ENCODE measurements at regions of chr11 and their contacts with region 1.

Region 1: GRCh38 chr11:1515082-1516060 is 28.8 kb upstream of the MOB2 start:
- DNase-seq: peak; percentile 53 to 87
- ATAC-seq: peak; percentile 89

Region 2: DNA sequence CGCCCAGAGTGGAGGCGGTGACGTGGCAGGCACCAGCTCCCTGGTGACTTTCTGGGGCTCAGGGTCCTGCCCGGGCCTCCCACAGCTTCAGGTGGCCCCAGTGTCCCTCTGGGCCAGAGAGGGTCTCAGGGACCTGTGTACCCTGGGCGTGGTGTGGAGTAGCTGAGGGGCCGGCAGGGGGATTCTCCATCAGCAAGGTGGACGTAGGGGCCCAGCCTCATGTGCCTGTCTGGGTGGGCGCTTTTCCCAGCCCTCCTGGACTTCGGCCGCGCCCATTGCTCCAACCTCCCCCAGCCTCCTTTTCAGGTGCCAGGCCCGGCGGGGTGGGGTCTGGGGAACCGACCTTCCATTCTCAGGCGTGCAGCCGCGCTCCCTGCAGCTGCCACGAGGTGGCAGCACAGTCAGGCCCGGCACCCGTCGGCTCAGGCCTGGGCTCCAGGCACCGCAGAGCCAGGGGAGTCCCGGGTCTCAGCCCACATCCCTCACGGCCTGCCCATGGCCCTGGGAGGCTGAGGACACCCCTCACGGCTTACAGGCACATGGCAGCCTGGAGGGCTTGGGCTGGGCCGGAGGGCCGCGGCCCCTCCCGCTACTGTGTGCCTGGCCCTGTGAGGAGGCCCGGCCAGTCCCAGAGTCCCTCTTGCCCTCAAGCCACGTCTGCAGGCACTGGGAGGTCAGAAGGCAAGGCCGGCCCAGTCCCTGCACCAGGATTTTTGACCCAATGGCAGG is 312.4 kb before region 1 on chr11:
- intact Hi-C with region 1: loop called (anchors 5 to 10 kb)
- DNase-seq: peak; percentile 43 to 76
- ATAC-seq: peak; percentile 73

Region 3: GRCh38 chr11:1458340-1459218 is 56.8 kb before region 1 on chr11:
- intact Hi-C with region 1: loop called in 1 of 2 experiments (anchors 10 kb)
- DNase-seq: peak; percentile 76 to 77
- ATAC-seq: peak; percentile 73

Region 4: GRCh38 chr11:1628506-1629325 is 113.3 kb after region 1 on chr11:
- intact Hi-C with region 1: no loop called
- DNase-seq: peak in 1 of 2 donors; percentile 64
- ATAC-seq: peak; percentile 91

Measured in left colon (tissue), 2 donors.